ENCODE measurements at regions of chr3 and their contacts with region 1.

Region 1: GRCh38 chr3:44323341-44323955 is 15.1 kb upstream of the TCAIM start:
- DNase-seq: no peak
- ATAC-seq: peak; percentile 56
- H3K4me3 ChIP-seq: no peak overlapping the region
- H3K27ac ChIP-seq: no peak overlapping the region
- H3K4me1 ChIP-seq: no peaks in the 10 kb centered on the region
- H3K27me3 ChIP-seq: no peaks in the 10 kb centered on the region
- CTCF ChIP-seq: peak; percentile 73 to 83 (median 76)
- EP300 ChIP-seq: no peak
- POLR2A ChIP-seq: no peak
- RAD21 ChIP-seq: peak; percentile 98

Region 2: DNA sequence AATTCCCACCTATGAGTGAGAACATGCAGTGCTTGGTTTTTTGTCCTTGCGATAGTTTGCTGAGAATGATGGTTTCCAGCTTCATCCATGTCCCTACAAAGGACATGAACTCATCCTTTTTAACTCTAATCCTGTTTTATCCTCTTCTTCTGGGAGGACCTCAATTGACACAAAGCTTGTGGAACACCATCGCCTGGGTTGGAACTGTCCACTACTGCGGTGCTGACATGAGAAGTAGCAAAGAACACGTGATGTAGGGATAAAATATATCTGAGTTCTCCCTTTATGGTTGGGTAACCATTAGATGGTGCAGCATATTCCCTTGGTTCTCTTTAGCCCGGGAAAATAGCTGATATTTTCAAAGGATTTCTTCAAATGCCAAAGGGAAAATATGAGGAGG is 187.0 kb before region 1 on chr3:
- CTCF ChIA-PET with region 1: no interaction called
- POLR2A ChIA-PET with region 1: no interaction called
- RAD21 ChIA-PET with region 1: no interaction called
- SMC1A ChIA-PET with region 1: no interaction called
- in situ Hi-C with region 1: no loop called
- intact Hi-C with region 1: no loop called
- DNase-seq: no peak
- ATAC-seq: no peak
- H3K4me3 ChIP-seq: no peak overlapping the region
- H3K27ac ChIP-seq: no peak overlapping the region
- H3K4me1 ChIP-seq: no peaks in the 10 kb centered on the region; the same call in 1 of the 2 replicates
- H3K27me3 ChIP-seq: peaks cover 0 to 2% of the 10 kb centered on the region in 2 experiments; a peak in 1 of 4 replicates
- CTCF ChIP-seq: no peak
- EP300 ChIP-seq: no peak
- POLR2A ChIP-seq: no peak
- RAD21 ChIP-seq: no peak

Region 3: GRCh38 chr3:44510000-44510368 is 186.5 kb after region 1 on chr3:
- CTCF ChIA-PET with region 1: interaction called, 8 read pairs
- POLR2A ChIA-PET with region 1: interaction called, 3 read pairs
- RAD21 ChIA-PET with region 1: interaction called, 6 read pairs
- SMC1A ChIA-PET with region 1: interaction called, 3 read pairs
- in situ Hi-C with region 1: no loop called
- intact Hi-C with region 1: loop called (anchors 5 kb)
- DNase-seq: no peak
- ATAC-seq: peak; percentile 61
- H3K4me3 ChIP-seq: peak overlapping the region; percentile 81
- H3K27ac ChIP-seq: peak overlapping the region; percentile 81
- H3K4me1 ChIP-seq: peaks cover 8% of the 10 kb centered on the region
- H3K27me3 ChIP-seq: no peaks in the 10 kb centered on the region
- CTCF ChIP-seq: no peak
- EP300 ChIP-seq: no peak
- POLR2A ChIP-seq: no peak
- RAD21 ChIP-seq: no peak

Region 4: DNA sequence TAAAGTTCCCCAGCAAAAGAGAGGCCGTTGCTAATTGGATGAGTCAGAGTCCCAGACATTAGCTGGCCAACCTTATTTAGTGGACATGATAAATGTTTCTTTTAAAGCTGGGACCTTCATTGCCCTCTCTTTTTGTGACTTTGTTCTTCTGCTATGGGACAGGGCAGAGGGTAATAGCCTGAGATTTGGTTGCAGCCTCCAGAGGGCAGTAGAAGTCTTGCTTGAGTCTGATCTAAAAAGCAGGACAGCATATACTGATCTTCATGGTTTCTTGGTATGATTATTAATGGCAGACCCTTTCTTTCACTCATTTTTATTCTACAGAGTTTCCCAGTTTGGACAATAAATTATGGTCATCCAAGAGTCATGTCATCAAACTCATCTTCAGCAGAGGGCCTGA is 206.5 kb after region 1 on chr3:
- CTCF ChIA-PET with region 1: interaction called, 8 read pairs
- POLR2A ChIA-PET with region 1: no interaction called
- RAD21 ChIA-PET with region 1: interaction called, 5 read pairs
- SMC1A ChIA-PET with region 1: interaction called, 4 read pairs
- in situ Hi-C with region 1: no loop called
- intact Hi-C with region 1: loop called (anchors 5 kb)
- DNase-seq: no peak
- ATAC-seq: peak; percentile 68
- H3K4me3 ChIP-seq: no peak overlapping the region
- H3K27ac ChIP-seq: no peak overlapping the region
- H3K4me1 ChIP-seq: no peaks in the 10 kb centered on the region
- H3K27me3 ChIP-seq: no peaks in the 10 kb centered on the region; a peak in 1 of 4 replicates
- CTCF ChIP-seq: peak; percentile 45 to 49 (median 45); a peak in 5 of 6 replicates
- EP300 ChIP-seq: no peak
- POLR2A ChIP-seq: no peak
- RAD21 ChIP-seq: peak; percentile 59

Region 5: GRCh38 chr3:44913868-44914468 is 590.5 kb after region 1 on chr3:
- CTCF ChIA-PET with region 1: interaction called, 3 read pairs
- POLR2A ChIA-PET with region 1: no interaction called
- RAD21 ChIA-PET with region 1: no interaction called
- SMC1A ChIA-PET with region 1: interaction called, 3 read pairs
- in situ Hi-C with region 1: no loop called
- intact Hi-C with region 1: loop called (anchors 2 kb)
- DNase-seq: no peak
- ATAC-seq: peak; percentile 98
- H3K4me3 ChIP-seq: no peak overlapping the region
- H3K27ac ChIP-seq: no peak overlapping the region
- H3K4me1 ChIP-seq: no peaks in the 10 kb centered on the region
- H3K27me3 ChIP-seq: no peaks in the 10 kb centered on the region; a peak in 1 of 4 replicates
- CTCF ChIP-seq: peak; percentile 82 to 86 (median 84)
- EP300 ChIP-seq: no peak
- POLR2A ChIP-seq: no peak
- RAD21 ChIP-seq: peak; percentile 73

Measured in GM12878 (cell line).